ENCODE measurements at regions of chr5 and their contacts with region 1.

Region 1: DNA sequence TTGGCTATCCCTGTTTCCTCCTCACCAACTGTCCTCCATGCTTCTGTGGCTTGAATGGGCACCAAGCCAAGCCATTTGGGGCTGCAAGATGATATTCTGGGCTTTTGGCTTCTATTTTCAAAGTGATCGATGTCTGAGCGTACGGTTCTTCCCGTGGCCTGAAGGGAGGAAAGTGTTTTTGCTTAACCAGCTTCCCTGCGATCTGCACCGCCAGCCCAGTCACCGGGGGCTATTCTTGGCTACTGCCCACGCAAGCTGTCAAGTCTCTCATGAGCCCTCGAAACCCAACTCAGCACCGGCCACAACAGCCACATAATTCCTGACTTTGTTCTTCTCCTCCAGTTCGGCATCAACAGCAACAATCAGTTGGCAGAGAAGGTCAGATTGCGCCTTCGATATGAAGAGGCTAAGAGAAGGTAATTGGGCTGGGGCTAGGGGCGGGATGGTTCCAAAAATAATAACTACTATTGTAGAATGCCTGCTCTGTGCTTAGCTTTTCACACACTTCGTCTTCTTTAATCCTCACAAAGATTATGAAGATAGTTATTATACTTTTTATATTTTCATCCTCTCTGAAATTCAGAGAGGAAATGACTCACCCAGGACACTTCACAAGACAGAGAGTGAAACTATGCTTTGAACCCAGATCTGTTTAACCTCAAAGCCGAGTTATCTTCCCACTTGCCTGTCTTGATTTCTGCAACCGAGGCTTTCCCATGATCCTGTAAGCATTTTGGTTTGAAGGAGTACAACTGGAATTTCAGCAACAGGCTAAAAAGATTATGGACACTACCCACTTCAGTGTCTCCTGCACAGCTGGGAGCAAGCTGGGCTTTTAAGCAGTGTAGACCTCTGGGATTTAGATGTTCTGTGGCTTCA is 76.5 kb upstream of the RARS1 start:
- DNase-seq: peak; percentile 47
- H3K4me3 ChIP-seq: no peak overlapping the region
- H3K27ac ChIP-seq: peak overlapping the region; percentile 61
- H3K4me1 ChIP-seq: peaks cover 25% of the 10 kb centered on the region
- H3K27me3 ChIP-seq: no peaks in the 10 kb centered on the region
- CTCF ChIP-seq: no peak

Region 2: GRCh38 chr5:168434001-168434400 is 24.2 kb after region 1 on chr5:
- CTCF ChIA-PET with region 1: interaction called, 12 read pairs
- POLR2A ChIA-PET with region 1: no interaction called
- intact Hi-C with region 1: no loop called
- DNase-seq: no peak
- H3K4me3 ChIP-seq: no peak overlapping the region
- H3K27ac ChIP-seq: no peak overlapping the region
- H3K4me1 ChIP-seq: no peaks in the 10 kb centered on the region
- H3K27me3 ChIP-seq: no peaks in the 10 kb centered on the region
- CTCF ChIP-seq: no peak

Region 3: GRCh38 chr5:168468836-168469235 is 59.0 kb after region 1 on chr5:
- CTCF ChIA-PET with region 1: no interaction called
- POLR2A ChIA-PET with region 1: no interaction called
- intact Hi-C with region 1: no loop called
- DNase-seq: no peak
- H3K4me3 ChIP-seq: no peak overlapping the region
- H3K27ac ChIP-seq: no peak overlapping the region
- H3K4me1 ChIP-seq: no peaks in the 10 kb centered on the region
- H3K27me3 ChIP-seq: no peaks in the 10 kb centered on the region
- CTCF ChIP-seq: no peak

Region 4: GRCh38 chr5:168822745-168823281 is 413.0 kb after region 1 on chr5:
- CTCF ChIA-PET with region 1: no interaction called
- POLR2A ChIA-PET with region 1: no interaction called
- intact Hi-C with region 1: no loop called
- DNase-seq: no peak
- H3K4me3 ChIP-seq: no peak overlapping the region
- H3K27ac ChIP-seq: no peak overlapping the region
- H3K4me1 ChIP-seq: no peaks in the 10 kb centered on the region
- H3K27me3 ChIP-seq: peaks cover 99% of the 10 kb centered on the region
- CTCF ChIP-seq: no peak